Body of pancreas (tissue), 4 donors: ENCODE measurements at regions of chr6 and their contacts with region 1.

Region 1: DNA sequence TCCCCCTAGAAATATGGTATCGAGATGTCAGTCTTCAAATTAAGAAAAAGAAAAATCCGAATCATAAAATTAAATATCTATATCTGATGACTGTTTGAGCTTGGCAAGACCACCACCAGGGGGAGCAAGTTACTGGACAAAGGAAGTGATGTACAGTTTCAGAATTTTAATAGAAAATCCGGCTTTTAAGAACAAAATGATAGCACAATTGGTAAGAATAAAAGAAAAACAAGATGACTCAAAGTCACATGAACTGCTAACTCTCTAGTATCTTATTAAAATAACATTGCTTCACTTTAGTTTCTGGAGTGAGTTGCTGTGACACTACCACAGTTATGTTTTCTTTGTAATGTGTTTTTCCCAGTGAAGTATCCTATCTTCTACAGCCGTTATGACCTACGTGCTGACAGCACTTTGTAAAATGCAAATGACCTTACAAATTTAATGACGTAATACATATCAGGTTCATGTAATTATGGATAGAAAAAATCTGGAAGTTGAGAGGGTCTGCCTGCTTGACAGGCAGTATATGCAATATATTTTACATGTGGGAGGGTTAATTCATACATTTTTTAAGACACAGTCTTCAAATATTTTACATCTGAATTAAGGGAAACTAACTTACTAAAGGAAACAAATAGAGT is 405.3 kb upstream of the HS3ST5 start:
- DNase-seq: peak; percentile 55 to 70 (median 64)
- ATAC-seq: no peak
- H3K4me3 ChIP-seq: no peak overlapping the region
- H3K27ac ChIP-seq: no peak overlapping the region
- H3K4me1 ChIP-seq: no peaks in the 10 kb centered on the region
- H3K27me3 ChIP-seq: no peaks in the 10 kb centered on the region
- CTCF ChIP-seq: peak; percentile 56 to 81 (median 66)
- POLR2A ChIP-seq: no peak

Region 2: GRCh38 chr6:114793428-114793827 is 45.3 kb after region 1 on chr6:
- intact Hi-C with region 1: no loop called
- DNase-seq: no peak
- ATAC-seq: no peak
- H3K4me3 ChIP-seq: no peak overlapping the region
- H3K27ac ChIP-seq: no peak overlapping the region
- H3K4me1 ChIP-seq: no peaks in the 10 kb centered on the region
- H3K27me3 ChIP-seq: no peaks in the 10 kb centered on the region
- CTCF ChIP-seq: no peak
- POLR2A ChIP-seq: no peak

Region 3: GRCh38 chr6:115896538-115897129 is 1148.5 kb after region 1 on chr6:
- intact Hi-C with region 1: loop called (anchors 10 kb)
- DNase-seq: peak in 1 of 4 donors; percentile 19
- ATAC-seq: peak; percentile 52
- H3K4me3 ChIP-seq: no peak overlapping the region
- H3K27ac ChIP-seq: no peak overlapping the region
- H3K4me1 ChIP-seq: no peaks in the 10 kb centered on the region
- H3K27me3 ChIP-seq: no peaks in the 10 kb centered on the region
- CTCF ChIP-seq: peak; percentile 54 to 71 (median 69)
- POLR2A ChIP-seq: no peak